Activated T-helper 2 cell treated with anti-CD3 and anti-CD28 coated beads, Interferon-gamma antibody, Interleukin-2, Interleukin-4, amounts not matched to agents 10 μg/mL and 5 μg/mL and 100 μg/mL, durations not matched to agents 14 hours and 24 hours and 36 hours (primary cell): ENCODE measurements at regions of chr13 and their contacts with region 1.

Region 1: GRCh38 chr13:97975848-97976609 is 22.6 kb downstream of the IPO5 start:
- DNase-seq: peak; percentile 87
- H3K4me3 Mint-ChIP-seq: peak overlapping the region; percentile 91
- H3K27ac Mint-ChIP-seq: peak overlapping the region; percentile 99
- H3K4me1 Mint-ChIP-seq: peaks cover 27% of the 10 kb centered on the region
- H3K27me3 Mint-ChIP-seq: peaks cover 7% of the 10 kb centered on the region

Region 2: GRCh38 chr13:97855570-97856303 is 120.3 kb before region 1 on chr13:
- intact Hi-C with region 1: loop called (anchors 10 kb)
- DNase-seq: no peak
- H3K4me3 Mint-ChIP-seq: no peak overlapping the region
- H3K27ac Mint-ChIP-seq: no peak overlapping the region
- H3K4me1 Mint-ChIP-seq: peaks cover 3% of the 10 kb centered on the region
- H3K27me3 Mint-ChIP-seq: no peaks in the 10 kb centered on the region

Region 3: GRCh38 chr13:97999653-98000052 is 23.6 kb after region 1 on chr13:
- intact Hi-C with region 1: no loop called
- DNase-seq: no peak
- H3K4me3 Mint-ChIP-seq: no peak overlapping the region
- H3K27ac Mint-ChIP-seq: peak overlapping the region; percentile 12
- H3K4me1 Mint-ChIP-seq: peaks cover 7% of the 10 kb centered on the region
- H3K27me3 Mint-ChIP-seq: no peaks in the 10 kb centered on the region

Region 4: DNA sequence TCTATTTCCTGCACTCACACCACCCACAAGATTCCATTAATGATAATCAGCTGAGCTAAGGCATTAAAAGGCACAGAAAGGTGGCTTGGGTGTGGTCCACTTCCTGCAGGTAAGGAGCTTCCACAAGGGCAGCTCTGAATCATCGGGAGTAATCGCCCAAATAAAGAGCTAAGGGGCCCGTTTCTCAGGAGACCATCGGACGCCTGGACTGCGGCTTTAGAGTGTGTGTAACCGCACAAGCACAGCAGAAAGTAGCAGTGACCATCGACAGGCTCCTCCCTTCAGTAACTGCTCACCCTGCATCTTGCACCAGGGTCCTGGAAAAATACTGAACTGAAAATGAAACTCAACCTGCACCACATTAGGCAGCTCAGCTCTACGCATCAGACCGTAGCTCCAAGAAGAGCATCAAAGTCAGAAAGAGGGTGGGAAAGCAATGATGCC is 594.9 kb after region 1 on chr13:
- intact Hi-C with region 1: loop called (anchors 5 kb)
- DNase-seq: peak; percentile 53
- H3K4me3 Mint-ChIP-seq: peak overlapping the region; percentile 73
- H3K27ac Mint-ChIP-seq: peak overlapping the region; percentile 83
- H3K4me1 Mint-ChIP-seq: peaks cover 83% of the 10 kb centered on the region
- H3K27me3 Mint-ChIP-seq: no peaks in the 10 kb centered on the region

Region 5: DNA sequence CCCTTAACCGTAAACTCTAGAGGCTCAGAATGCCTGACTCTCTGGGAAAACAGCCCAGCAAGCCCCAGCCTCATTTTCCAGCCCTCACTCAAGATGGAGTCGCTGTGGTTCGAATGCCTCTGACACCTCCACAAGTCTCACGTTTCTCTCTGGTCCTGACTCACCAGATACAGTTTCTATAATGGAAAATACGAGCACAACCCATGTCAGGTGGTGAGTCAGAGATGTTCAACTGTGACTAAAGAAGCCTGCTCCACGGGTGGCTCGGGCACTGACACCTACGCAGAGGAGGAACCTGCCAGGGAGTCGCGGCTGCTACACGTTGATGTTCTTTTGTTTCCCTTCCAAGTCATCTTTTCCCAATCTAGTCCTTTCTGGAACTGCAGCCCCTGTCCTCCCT is 688.0 kb after region 1 on chr13:
- intact Hi-C with region 1: loop called (anchors 2 kb)
- DNase-seq: peak; percentile 18
- H3K4me3 Mint-ChIP-seq: no peak overlapping the region
- H3K27ac Mint-ChIP-seq: peak overlapping the region; percentile 58
- H3K4me1 Mint-ChIP-seq: peaks cover 18% of the 10 kb centered on the region
- H3K27me3 Mint-ChIP-seq: peaks cover 27% of the 10 kb centered on the region